ENCODE measurements at regions of chr3 and their contacts with region 1.

Region 1: GRCh38 chr3:31610700-31611275 is 78.1 kb downstream of the STT3B start:
- DNase-seq: no peak
- H3K4me3 ChIP-seq: no peak overlapping the region
- H3K27ac ChIP-seq: no peak overlapping the region
- H3K4me1 ChIP-seq: peaks cover 0 to 25% (median 3%) of the 10 kb centered on the region in 3 donors
- H3K27me3 ChIP-seq: no peaks in the 10 kb centered on the region
- CTCF ChIP-seq: peak in 5 of 6 experiments; percentile 32 to 69 (median 55)
- POLR2A ChIP-seq: no peak

Region 2: DNA sequence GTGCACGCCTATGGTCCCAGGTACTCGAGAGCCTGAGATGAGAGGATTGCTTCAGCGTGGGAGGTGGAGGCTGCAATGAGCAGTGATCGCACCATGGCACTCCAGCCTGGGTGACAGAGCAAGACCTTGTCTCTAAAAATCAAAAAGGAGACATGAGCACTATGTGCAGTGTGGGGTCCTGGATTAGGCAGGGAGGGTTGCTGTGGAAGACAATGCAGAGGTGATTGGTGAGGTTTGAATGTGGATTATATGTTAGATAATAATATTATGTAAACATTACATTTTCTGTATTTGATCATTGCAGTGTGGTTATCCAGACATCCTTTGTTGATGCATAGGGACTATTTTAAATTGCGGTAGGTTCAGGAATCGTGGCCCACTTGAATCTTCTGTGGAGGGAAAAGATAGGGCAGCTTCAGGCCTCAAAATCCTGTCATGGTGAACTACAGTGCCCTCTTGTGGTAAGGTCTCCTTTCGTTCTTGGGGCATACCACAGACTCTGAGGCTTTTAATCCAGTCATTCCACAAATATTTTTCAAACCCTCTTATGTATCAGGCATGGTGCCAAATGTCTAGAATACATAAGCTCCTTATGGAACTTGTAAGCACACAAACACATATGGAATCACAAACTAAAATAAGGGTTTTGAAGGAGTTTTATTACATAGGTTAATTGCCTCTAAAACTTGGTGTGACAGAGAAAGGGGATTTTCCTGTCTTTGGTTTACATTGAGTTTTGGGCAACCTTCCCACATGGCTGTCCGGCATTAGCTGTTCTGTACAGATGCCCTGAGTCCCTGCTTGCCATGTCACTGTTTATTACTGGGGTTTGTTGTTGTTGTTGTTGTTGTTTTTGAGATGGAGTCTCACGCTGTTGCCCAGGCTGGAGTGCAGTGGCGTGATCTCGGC is 533.3 kb after region 1 on chr3:
- intact Hi-C with region 1: loop called (anchors 10 kb)
- DNase-seq: no peak
- H3K4me3 ChIP-seq: no peak overlapping the region
- H3K27ac ChIP-seq: no peak overlapping the region
- H3K4me1 ChIP-seq: peaks cover 0 to 23% (median 0%) of the 10 kb centered on the region in 3 donors
- H3K27me3 ChIP-seq: no peaks in the 10 kb centered on the region
- CTCF ChIP-seq: peak; percentile 69 to 85 (median 79)
- POLR2A ChIP-seq: no peak

Measured in esophagus squamous epithelium (tissue), 5 donors.